CD8-positive, alpha-beta T cell (primary cell): ENCODE measurements at regions of chr5 and their contacts with region 1.

Region 1: GRCh38 chr5:122192497-122193496 is 63.5 kb downstream of the ZNF474 start:
- DNase-seq: peak in 2 of 9 experiments; percentile 7 to 20
- ATAC-seq: no peak
- H3K4me3 ChIP-seq: no peak overlapping the region
- H3K4me3 Mint-ChIP-seq: no peak overlapping the region
- H3K27ac ChIP-seq: no peak overlapping the region
- H3K27ac Mint-ChIP-seq: no peak overlapping the region
- H3K4me1 ChIP-seq: no peaks in the 10 kb centered on the region
- H3K4me1 Mint-ChIP-seq: no peaks in the 10 kb centered on the region
- H3K27me3 ChIP-seq: no peaks in the 10 kb centered on the region
- H3K27me3 Mint-ChIP-seq: peaks cover 13% of the 10 kb centered on the region
- CTCF ChIP-seq: no peak

Region 2: DNA sequence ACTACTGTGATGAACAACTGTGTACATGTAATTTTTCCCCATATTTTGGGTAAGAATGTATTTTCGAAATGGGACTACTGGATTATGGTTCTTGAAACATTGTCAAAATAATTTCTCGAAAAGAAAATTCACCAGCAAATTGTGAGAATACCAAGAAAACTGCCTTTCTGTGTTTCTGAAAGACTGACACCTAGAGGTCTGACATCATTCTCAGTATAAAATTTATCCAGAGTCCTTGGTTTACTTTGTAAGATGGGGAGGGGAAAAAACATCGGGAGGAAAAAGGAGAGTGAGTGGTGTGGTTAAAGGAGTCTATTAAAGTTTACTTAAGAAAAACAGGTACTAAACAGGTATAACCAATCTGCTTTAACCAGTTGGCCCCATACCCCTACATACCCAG is 1081.2 kb after region 1 on chr5:
- CTCF ChIA-PET with region 1: no interaction called
- POLR2A ChIA-PET with region 1: no interaction called
- intact Hi-C with region 1: no loop called
- DNase-seq: no peak
- ATAC-seq: no peak
- H3K4me3 ChIP-seq: no peak overlapping the region
- H3K4me3 Mint-ChIP-seq: no peak overlapping the region
- H3K27ac ChIP-seq: no peak overlapping the region
- H3K27ac Mint-ChIP-seq: no peak overlapping the region
- H3K4me1 ChIP-seq: no peaks in the 10 kb centered on the region
- H3K4me1 Mint-ChIP-seq: no peaks in the 10 kb centered on the region
- H3K27me3 ChIP-seq: no peaks in the 10 kb centered on the region
- H3K27me3 Mint-ChIP-seq: no peaks in the 10 kb centered on the region
- CTCF ChIP-seq: no peak

Region 3: GRCh38 chr5:123344816-123345426 is 1152.1 kb after region 1 on chr5:
- CTCF ChIA-PET with region 1: no interaction called
- POLR2A ChIA-PET with region 1: no interaction called
- intact Hi-C with region 1: loop called in 1 of 2 experiments (anchors 10 kb)
- DNase-seq: peak in 1 of 9 experiments; percentile 2
- ATAC-seq: no peak
- H3K4me3 ChIP-seq: no peak overlapping the region
- H3K4me3 Mint-ChIP-seq: no peak overlapping the region
- H3K27ac ChIP-seq: no peak overlapping the region
- H3K27ac Mint-ChIP-seq: no peak overlapping the region
- H3K4me1 ChIP-seq: no peaks in the 10 kb centered on the region
- H3K4me1 Mint-ChIP-seq: no peaks in the 10 kb centered on the region
- H3K27me3 ChIP-seq: no peaks in the 10 kb centered on the region
- H3K27me3 Mint-ChIP-seq: no peaks in the 10 kb centered on the region
- CTCF ChIP-seq: no peak

Region 4: GRCh38 chr5:123520677-123521247 is 1328.0 kb after region 1 on chr5:
- CTCF ChIA-PET with region 1: no interaction called
- POLR2A ChIA-PET with region 1: no interaction called
- intact Hi-C with region 1: no loop called
- DNase-seq: no peak
- ATAC-seq: no peak
- H3K4me3 ChIP-seq: no peak overlapping the region
- H3K4me3 Mint-ChIP-seq: no peak overlapping the region
- H3K27ac ChIP-seq: no peak overlapping the region
- H3K27ac Mint-ChIP-seq: no peak overlapping the region
- H3K4me1 ChIP-seq: peaks cover 18% of the 10 kb centered on the region
- H3K4me1 Mint-ChIP-seq: peaks cover 61% of the 10 kb centered on the region
- H3K27me3 ChIP-seq: no peaks in the 10 kb centered on the region
- H3K27me3 Mint-ChIP-seq: no peaks in the 10 kb centered on the region
- CTCF ChIP-seq: no peak